Caki2 (cell line): ENCODE measurements at regions of chr4 and their contacts with region 1.

Region 1: DNA sequence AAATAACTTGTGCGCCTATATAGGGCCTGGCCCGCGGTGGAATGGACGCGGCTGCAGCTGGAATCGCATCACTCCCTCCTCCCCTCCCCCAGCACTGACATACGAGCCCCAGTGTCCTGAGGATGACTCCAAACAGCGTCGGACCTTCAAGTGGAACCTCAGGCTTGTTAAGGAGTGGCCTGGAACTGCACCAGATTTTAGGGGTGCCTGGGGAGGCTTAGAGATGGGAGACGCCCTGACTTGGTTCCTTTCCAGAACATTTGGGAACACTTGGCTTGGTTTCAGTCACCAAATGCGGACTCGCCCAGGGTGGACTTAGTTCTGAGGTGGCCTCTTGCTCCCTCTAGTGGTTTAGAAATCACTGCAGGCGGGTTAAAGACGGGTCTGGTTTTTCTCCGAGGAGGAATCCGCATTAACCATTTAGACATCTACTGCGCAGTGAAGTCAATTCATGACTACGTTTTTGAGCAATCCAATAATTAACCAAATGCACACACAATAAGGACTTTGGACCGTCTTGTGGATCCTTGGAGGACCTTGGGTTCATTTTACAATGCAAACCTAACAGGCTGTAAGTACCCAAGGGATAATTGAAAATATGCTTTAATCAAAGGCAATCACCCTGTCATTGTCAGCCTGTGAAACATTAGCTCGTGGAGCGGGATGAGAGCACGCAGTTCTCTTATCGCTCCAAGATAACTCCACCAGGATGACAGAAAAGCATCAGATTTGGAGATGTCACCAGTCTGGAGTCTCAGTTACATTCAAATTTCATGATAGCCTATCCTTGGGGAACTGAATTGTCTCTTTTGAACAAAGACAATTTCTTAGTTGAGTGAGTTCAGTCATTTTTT is 11.2 kb upstream of the PDGFRA start:
- DNase-seq: peak; percentile 83

Region 2: GRCh38 chr4:53889326-53890055 is 328.4 kb before region 1 on chr4:
- in situ Hi-C with region 1: no loop called
- DNase-seq: no peak

Region 3: GRCh38 chr4:53929955-53930798 is 287.7 kb before region 1 on chr4:
- in situ Hi-C with region 1: loop called (anchors 25 kb)
- DNase-seq: peak; percentile 83

Region 4: GRCh38 chr4:54539500-54540029 is 321.7 kb after region 1 on chr4:
- in situ Hi-C with region 1: no loop called
- DNase-seq: peak; percentile 74